Activated CD4-positive, alpha-beta T cell treated with anti-CD3 and anti-CD28 coated beads for 36 hours (primary cell): ENCODE measurements at regions of chr11 and their contacts with region 1.

Region 1: GRCh38 chr11:119323538-119324033 is 6.7 kb upstream of the MCAM start:
- DNase-seq: peak; percentile 90
- ATAC-seq: peak; percentile 21
- H3K4me3 Mint-ChIP-seq: no peak overlapping the region
- H3K27ac Mint-ChIP-seq: no peak overlapping the region
- H3K4me1 Mint-ChIP-seq: peaks cover 20% of the 10 kb centered on the region
- H3K27me3 Mint-ChIP-seq: peaks cover 3% of the 10 kb centered on the region

Region 2: DNA sequence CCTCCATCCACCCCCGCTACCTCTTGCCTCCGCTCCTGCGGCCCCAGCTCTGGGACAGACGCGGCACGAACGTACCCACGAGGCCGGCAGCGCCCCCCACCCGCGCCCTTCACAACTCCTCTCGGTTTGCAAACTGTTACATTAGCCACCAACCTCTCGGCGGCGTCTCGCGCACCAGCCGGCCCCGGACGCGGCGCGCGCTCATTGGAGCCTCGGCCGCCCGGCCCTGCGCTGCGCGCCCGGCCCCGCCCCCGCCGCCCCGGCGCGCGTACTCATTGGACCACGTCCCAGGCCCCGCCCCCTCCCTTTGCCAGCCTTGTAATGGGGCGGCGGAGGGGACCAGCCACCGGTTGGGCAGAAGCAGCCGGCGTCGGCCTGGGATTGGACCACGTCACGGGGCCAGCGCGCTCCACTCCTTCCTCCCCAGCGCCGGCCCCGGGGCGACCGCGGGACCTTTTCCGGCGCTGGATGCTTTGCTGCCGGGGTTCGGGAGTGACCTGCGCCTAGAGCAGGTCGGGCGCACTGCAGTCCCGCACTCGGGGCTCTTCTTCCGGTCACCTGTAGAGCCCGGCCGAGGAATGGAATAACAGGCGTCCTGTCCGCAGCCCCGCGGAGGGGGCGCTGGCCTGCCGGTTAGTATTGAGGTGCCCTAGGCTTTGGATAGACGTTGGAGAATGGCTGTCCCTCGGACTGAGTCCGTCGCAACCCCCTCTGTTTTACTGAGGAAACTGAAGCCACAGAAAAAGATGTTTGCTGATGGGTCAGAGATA is 266.4 kb before region 1 on chr11 and contains the start of gene HYOU1:
- CTCF ChIA-PET with region 1: interaction called, 4 read pairs
- POLR2A ChIA-PET with region 1: no interaction called
- intact Hi-C with region 1: loop called in 1 of 2 experiments (anchors 2 kb)
- DNase-seq: peak; percentile 100
- ATAC-seq: peak; percentile 96
- H3K4me3 Mint-ChIP-seq: peak within 1 kb of the TSS; percentile 82
- H3K27ac Mint-ChIP-seq: peak within 1 kb of the TSS; percentile 94
- H3K4me1 Mint-ChIP-seq: peaks cover 34% of the 10 kb centered on the region
- H3K27me3 Mint-ChIP-seq: no peaks in the 10 kb centered on the region
- total RNA-seq, gene HYOU1: 104 to 114 TPM

Region 3: DNA sequence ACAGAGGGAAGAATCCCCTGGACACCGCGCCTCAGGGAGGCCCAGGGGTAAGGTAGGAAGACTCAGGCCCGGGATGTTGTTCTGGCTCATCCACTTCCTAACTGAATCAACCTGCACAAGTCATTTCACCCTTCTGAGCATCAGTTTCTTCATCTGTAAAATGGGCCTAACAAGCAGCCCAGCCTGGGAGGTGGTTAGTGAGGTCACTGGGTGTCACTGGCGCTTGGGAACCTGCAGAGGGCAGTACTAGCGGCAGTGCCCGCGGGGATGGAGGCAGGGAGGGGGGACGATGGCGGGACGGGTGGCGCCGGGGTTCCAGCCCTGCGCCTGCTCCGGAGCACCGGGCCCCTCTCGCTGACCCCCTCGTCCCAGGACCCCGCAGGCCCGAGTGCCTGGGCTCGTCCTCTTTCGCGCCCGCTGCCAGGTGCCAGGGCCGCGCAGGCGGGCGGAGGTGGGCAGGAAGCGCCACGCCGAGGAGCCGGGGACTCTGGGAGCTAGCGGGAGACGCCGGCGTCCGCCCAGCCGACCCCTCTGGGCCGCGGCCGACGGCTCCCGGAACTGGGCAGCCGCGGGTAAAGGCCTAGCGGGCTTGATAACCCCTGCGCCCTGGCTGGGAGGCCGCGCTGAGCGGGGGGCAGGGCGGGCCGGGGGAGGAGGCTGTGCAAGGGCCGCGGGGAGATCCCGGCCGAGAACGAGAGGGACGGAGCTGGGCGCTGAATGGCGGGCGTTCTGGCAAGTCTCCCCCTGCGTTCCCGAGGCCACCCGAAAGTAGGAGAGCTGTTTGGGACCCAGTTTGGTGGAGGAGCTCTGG is 154.9 kb before region 1 on chr11 and contains the start of gene NLRX1:
- CTCF ChIA-PET with region 1: interaction called, 5 read pairs
- POLR2A ChIA-PET with region 1: no interaction called
- intact Hi-C with region 1: loop called in 1 of 2 experiments (anchors 1 kb)
- DNase-seq: peak; percentile 93
- ATAC-seq: peak; percentile 94
- H3K4me3 Mint-ChIP-seq: peak within 1 kb of the TSS; percentile 88
- H3K27ac Mint-ChIP-seq: peak within 1 kb of the TSS; percentile 90
- H3K4me1 Mint-ChIP-seq: peaks cover 11% of the 10 kb centered on the region
- H3K27me3 Mint-ChIP-seq: no peaks in the 10 kb centered on the region
- total RNA-seq, gene NLRX1: 18.2 to 25.0 TPM

Region 4: DNA sequence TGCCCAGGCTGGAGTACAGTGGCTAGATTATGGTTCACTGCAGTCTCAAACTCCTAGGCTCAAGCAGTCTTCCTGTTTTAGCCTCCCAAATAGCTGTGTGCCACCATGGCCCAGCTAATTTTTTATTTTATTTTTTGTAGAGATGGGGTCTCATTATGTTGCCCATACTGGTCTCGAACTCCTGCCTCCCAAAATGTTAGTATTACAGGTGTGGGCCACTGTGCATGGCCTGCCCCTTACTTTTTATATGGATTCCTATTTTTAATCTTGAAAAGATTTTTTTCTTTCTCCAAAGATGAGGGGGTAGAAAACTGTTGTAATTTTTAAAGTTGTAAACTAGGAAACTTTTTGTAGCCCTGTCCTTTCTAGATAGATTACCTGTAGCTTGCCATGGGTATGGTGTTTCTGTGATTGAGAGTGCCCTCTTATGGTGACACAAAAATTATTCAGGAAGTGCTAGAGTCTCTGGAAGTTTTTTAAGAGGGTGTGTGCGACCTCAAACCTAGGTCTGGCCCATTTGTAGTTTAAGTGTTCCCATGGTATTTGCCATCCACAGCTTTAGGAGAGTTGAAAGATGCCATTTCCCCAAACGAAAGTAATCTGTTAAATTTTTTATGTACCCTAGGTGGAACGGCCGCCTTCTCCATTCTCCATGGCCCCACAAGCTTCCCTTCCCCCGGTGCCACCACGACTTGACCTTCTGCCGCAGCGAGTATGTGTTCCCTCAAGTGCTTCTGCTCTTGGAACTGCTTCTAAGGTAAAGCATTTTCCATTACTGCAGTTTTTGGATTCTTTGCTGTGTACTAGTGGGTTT is 39.0 kb before region 1 on chr11:
- CTCF ChIA-PET with region 1: interaction called, 11 read pairs
- POLR2A ChIA-PET with region 1: no interaction called
- intact Hi-C with region 1: no loop called
- DNase-seq: no peak
- ATAC-seq: peak; percentile 94
- H3K4me3 Mint-ChIP-seq: no peak overlapping the region
- H3K27ac Mint-ChIP-seq: peak overlapping the region; percentile 47
- H3K4me1 Mint-ChIP-seq: peaks cover 19% of the 10 kb centered on the region
- H3K27me3 Mint-ChIP-seq: no peaks in the 10 kb centered on the region

Region 5: GRCh38 chr11:119340344-119341221 is 17.0 kb after region 1 on chr11 and contains the start of gene C1QTNF5:
- CTCF ChIA-PET with region 1: interaction called, 69 read pairs
- POLR2A ChIA-PET with region 1: interaction called, 3 read pairs
- intact Hi-C with region 1: loop called in 1 of 2 experiments (anchors 1 kb)
- DNase-seq: no peak
- ATAC-seq: no peak
- H3K4me3 Mint-ChIP-seq: no peak within 1 kb of the TSS
- H3K27ac Mint-ChIP-seq: no peak within 1 kb of the TSS
- H3K4me1 Mint-ChIP-seq: peaks cover 26% of the 10 kb centered on the region
- H3K27me3 Mint-ChIP-seq: peaks cover 27% of the 10 kb centered on the region
- total RNA-seq, gene C1QTNF5: not detected

Region 6: DNA sequence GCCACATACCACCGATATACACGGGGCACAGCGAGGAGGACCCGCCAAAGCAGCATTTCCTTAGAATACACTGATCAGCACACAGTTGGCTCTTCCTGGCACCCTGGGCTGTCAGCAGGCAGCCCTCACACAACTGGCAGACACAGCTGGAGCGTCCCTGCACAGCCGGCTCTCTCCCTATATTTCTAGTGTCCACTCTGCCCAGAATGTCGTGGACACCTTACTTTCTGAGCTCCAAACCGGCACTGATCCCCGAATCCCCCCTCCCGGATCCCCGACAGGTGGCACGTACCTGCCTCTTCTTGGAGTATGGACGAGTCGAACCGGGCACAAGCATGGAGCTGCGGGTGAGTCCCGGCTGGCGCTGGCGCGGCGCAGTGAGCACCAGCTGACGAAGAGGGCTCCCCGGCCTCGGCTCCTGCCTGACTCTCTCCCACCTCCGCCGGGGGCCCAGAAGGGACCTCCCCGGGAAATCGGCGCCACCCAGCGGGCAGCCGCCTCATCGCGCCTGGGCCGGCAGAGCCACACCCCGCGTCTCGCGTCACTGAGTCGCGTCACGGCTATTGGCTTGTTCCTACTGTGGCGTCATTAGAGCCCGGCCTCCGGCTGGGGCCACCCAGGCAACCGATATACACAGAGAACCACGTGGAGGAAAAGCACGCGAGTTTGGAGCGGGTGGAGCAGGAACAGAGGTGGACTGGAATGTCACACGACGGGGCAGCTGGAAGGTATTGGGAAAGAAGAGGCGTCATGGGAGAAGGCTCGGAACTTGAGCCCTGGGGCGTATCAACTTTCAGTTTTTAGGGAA is 57.8 kb after region 1 on chr11 and contains the start of gene USP2:
- CTCF ChIA-PET with region 1: interaction called, 17 read pairs
- POLR2A ChIA-PET with region 1: no interaction called
- intact Hi-C with region 1: no loop called
- DNase-seq: peak; percentile 98
- ATAC-seq: peak; percentile 98
- H3K4me3 Mint-ChIP-seq: no peak within 1 kb of the TSS
- H3K27ac Mint-ChIP-seq: peak within 1 kb of the TSS; percentile 18
- H3K4me1 Mint-ChIP-seq: peaks cover 7% of the 10 kb centered on the region
- H3K27me3 Mint-ChIP-seq: no peaks in the 10 kb centered on the region
- total RNA-seq, gene USP2: 0.58 to 0.71 TPM

Region 7: GRCh38 chr11:119806064-119806915 is 482.7 kb after region 1 on chr11:
- CTCF ChIA-PET with region 1: no interaction called
- POLR2A ChIA-PET with region 1: no interaction called
- intact Hi-C with region 1: no loop called
- DNase-seq: no peak
- ATAC-seq: no peak
- H3K4me3 Mint-ChIP-seq: no peak overlapping the region
- H3K27ac Mint-ChIP-seq: no peak overlapping the region
- H3K4me1 Mint-ChIP-seq: no peaks in the 10 kb centered on the region
- H3K27me3 Mint-ChIP-seq: peaks cover 5% of the 10 kb centered on the region